PC-3 (cell line): ENCODE measurements at regions of chr20 and their contacts with region 1.

Region 1: GRCh38 chr20:49982346-49983122 is at the start of gene SNAI1:
- DNase-seq: peak; percentile 96
- ATAC-seq: peak; percentile 92
- H3K4me3 ChIP-seq: peak within 1 kb of the TSS; percentile 70
- H3K27ac ChIP-seq: no peak within 1 kb of the TSS
- H3K4me1 ChIP-seq: peaks cover 25% of the 10 kb centered on the region
- H3K27me3 ChIP-seq: no peaks in the 10 kb centered on the region
- CTCF ChIP-seq: peak; percentile 77
- total RNA-seq, gene SNAI1: 5.4 and 6.2 TPM in 2 replicates

Region 2: GRCh38 chr20:50070991-50071888 is 88.7 kb after region 1 on chr20:
- CTCF ChIA-PET with region 1: interaction called, 77 read pairs
- POLR2A ChIA-PET with region 1: interaction called, 16 read pairs
- intact Hi-C with region 1: loop called (anchors 1 kb)
- DNase-seq: peak; percentile 98
- ATAC-seq: peak; percentile 99
- H3K4me3 ChIP-seq: peak overlapping the region; percentile 68
- H3K27ac ChIP-seq: no peak overlapping the region
- H3K4me1 ChIP-seq: 0 out of 2 replicates have a peak, but pooled peaks cover 4% of the 10 kb centered on the region
- H3K27me3 ChIP-seq: no peaks in the 10 kb centered on the region
- CTCF ChIP-seq: peak; percentile 100

Region 3: DNA sequence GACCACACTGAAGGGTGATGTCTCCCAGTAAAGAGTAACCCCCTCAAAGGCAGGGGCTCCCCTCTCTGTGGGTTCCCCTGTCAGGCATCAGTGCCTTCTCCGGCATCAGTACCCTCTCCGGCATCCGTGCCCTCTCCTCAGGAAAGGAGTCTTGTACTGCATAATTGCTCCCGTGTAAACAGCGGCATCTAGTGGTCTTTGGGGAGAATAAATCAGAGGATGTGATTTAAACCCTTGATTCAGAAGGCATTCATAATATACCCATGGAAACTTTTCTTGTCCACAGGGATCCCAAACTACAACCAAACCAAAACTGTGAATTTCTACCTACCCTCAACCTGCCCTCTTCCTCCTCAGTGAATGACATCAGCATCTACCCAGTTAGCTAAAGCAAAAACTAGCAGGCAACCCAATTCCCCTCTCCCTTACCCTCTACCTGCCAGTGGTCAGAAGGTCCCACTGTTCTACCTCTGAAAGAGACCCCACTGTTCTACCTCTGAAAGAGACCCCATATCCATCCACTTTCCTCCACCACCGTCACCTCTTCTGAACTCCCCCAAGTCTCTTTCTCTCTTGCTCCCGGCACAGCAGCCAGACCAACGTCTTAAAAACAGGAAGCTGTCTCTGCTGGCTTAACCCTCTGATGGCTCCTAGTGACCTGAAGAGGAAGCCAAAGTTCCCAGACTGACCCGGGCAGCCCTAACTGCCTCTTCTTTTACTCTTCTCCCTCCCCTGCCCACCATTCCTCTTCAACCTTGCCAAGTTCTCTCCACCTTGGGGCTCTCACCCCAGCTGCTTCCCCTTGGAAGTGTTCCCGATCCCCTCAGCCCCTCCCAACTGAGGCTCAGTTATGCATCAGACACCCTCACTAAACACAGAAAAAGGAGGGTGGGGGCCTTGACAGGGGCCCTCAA is 103.2 kb after region 1 on chr20:
- CTCF ChIA-PET with region 1: interaction called, 4 read pairs
- POLR2A ChIA-PET with region 1: no interaction called
- intact Hi-C with region 1: loop called (anchors 5 kb)
- DNase-seq: peak; percentile 75
- ATAC-seq: peak; percentile 68
- H3K4me3 ChIP-seq: no peak overlapping the region
- H3K27ac ChIP-seq: peak overlapping the region; percentile 18
- H3K4me1 ChIP-seq: peaks cover 27% of the 10 kb centered on the region
- H3K27me3 ChIP-seq: no peaks in the 10 kb centered on the region
- CTCF ChIP-seq: peak; percentile 98

Region 4: DNA sequence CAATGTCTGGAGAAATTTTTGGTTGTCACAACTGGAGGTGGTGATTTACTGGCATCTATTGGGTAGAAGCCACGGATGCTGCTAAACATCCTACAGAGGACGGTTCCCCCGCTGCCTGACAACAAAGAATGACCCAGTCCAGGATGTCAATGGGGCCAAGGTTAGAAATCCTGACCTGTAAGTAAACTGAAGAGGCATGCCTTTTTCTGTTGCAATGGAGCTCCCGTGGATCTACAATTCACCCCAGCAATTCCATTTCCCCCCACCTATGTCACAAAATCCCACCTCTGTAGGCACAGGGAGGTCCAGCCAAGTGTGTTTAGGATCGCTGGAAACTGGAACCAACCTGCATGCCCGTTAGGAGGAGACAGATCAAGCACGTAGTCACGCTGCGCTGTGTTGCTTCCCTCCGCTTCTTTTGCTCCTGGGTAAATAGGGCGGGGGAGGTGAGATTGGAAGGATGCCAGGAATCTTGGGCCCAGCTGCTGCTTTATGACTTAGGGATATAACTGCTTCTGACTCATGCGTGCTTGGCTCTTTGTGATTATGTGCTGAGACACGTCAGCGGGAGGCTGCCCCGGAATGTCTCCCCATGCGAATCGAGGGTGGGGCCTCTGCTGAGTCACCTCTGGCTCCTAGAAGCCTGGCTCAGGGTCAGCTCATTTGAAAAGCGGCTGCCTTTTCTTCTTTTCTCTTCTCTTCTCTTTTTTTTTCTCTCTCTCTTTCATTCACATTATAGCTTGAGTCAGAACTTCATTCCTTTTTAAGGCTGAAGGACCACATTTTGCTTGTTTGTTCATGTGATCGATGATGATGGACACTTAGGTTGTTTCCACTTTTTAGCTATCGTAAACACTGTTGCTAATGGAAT is 183.4 kb after region 1 on chr20:
- CTCF ChIA-PET with region 1: interaction called, 5 read pairs
- POLR2A ChIA-PET with region 1: no interaction called
- intact Hi-C with region 1: loop called (anchors 5 kb)
- DNase-seq: peak; percentile 100
- ATAC-seq: peak; percentile 89
- H3K4me3 ChIP-seq: peak overlapping the region; percentile 66
- H3K27ac ChIP-seq: peak overlapping the region; percentile 81
- H3K4me1 ChIP-seq: peaks cover 42% of the 10 kb centered on the region
- H3K27me3 ChIP-seq: no peaks in the 10 kb centered on the region
- CTCF ChIP-seq: peak; percentile 15; the same call in 1 of the 2 replicates